A673 (cell line): ENCODE measurements at regions of chr12 and their contacts with region 1.

Region 1: DNA sequence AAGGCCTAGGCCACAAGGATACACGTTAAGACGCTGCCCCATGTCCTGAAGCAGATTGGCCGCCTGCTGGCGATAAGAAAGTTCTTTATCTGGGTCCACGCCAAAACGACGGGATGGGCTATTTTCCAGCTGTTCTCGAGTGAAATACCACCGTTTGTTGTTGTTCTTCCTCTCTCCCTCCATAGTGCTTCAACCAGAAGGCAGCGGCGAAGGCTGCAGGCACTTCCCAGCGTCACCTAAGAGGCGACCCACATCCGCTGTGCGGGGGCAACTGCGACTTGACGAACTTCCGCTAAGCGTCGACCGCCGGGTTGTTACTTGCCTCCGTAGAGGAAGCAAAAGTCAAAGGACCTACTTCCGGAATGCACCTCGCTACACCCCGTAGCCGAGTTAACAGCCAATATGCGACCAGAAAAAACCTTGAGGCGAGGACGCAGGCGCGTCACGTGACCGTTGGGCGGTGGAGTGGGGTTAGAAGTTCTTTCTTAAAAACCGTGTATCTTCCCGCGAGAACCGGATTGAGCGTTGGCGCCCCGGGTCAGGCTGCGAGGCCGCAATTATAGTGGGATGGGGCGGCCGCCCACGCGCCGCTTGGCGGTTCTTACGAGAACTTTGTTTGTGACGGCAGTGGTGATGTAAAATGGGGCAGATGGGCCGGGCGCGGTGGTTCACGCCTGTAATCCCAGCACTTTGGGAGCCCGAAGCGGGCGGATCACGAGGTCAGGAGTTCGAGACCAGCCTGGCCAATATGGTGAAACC is at the start of gene CCNT1:
- DNase-seq: peak; percentile 100
- H3K4me3 ChIP-seq: peak within 1 kb of the TSS; percentile 74
- H3K27ac ChIP-seq: peak within 1 kb of the TSS; percentile 93
- H3K4me1 ChIP-seq: peaks cover 15% of the 10 kb centered on the region
- H3K27me3 ChIP-seq: no peaks in the 10 kb centered on the region
- CTCF ChIP-seq: no peak
- total RNA-seq, gene CCNT1: 51.0 and 51.8 TPM in 2 replicates

Region 2: DNA sequence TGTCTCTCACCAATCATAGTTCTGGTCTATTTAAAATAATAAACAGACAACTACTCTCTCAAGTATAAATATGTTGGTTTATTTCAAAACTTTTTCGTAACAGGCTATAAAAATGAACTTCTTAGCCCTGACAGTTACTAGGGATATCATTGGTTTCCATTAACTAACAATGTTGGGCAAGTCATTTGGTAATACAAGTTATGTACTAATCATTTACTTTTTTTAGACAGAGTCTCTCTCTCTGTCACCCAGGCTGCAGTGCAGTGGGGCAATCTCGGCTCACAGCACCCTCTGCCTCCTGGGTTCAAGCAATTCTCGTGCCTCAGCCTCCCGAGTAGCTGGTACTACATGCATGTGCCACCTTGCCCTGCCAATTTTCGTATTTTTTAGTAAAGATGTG is 20.0 kb before region 1 on chr12:
- CTCF ChIA-PET with region 1: no interaction called
- POLR2A ChIA-PET with region 1: interaction called, 11 read pairs
- intact Hi-C with region 1: no loop called
- DNase-seq: no peak
- H3K4me3 ChIP-seq: no peak overlapping the region
- H3K27ac ChIP-seq: no peak overlapping the region
- H3K4me1 ChIP-seq: no peaks in the 10 kb centered on the region
- H3K27me3 ChIP-seq: no peaks in the 10 kb centered on the region
- CTCF ChIP-seq: no peak

Region 3: GRCh38 chr12:48758221-48758620 is 41.5 kb after region 1 on chr12:
- CTCF ChIA-PET with region 1: no interaction called
- POLR2A ChIA-PET with region 1: no interaction called
- intact Hi-C with region 1: no loop called
- DNase-seq: no peak
- H3K4me3 ChIP-seq: no peak overlapping the region
- H3K27ac ChIP-seq: no peak overlapping the region
- H3K4me1 ChIP-seq: no peaks in the 10 kb centered on the region
- H3K27me3 ChIP-seq: no peaks in the 10 kb centered on the region
- CTCF ChIP-seq: no peak

Region 4: DNA sequence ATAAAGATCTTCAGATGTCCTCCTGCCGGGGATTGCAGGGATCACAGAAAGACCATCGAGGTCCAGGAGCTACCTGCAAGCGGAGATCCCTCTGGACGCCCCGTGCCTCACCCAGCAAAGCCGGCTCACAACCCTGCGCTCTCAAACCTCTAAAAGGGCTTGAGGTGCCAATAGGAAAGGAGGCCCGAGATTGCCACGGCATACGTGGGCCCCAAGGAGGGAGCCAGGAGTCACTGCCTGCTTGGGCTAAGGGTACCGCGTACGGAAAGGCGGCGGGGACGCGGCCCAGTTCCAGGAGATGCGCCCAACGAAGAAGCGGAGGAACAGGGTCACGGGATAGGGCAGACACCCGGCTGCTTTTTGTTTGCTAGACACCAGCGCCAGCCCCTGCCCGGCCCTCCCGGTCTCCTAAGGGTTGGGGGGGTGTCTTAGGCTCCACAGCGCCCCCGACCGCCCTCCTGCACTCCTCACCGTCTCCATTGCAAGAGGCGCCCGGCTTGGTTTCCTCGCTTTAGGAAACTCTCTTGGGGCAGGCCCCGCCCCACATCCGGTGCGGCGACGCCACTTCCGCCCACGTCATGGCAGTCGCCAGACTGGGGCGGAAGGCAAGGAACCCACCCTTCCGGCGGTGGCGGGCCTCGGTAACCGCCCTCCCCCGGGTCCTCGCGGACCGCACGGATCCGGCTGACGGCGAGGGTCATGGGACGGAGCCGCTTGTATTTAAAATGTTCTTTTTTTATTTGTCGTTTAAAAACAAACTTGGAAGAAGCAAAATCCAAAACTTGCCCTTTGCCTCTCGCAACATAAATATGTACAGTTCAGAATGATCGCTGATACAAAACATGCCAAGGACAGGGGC is 301.8 kb after region 1 on chr12 and contains the start of gene PRKAG1:
- CTCF ChIA-PET with region 1: no interaction called
- POLR2A ChIA-PET with region 1: no interaction called
- intact Hi-C with region 1: no loop called
- DNase-seq: peak; percentile 98
- H3K4me3 ChIP-seq: peak within 1 kb of the TSS; percentile 82
- H3K27ac ChIP-seq: peak within 1 kb of the TSS; percentile 95
- H3K4me1 ChIP-seq: peaks cover 16% of the 10 kb centered on the region
- H3K27me3 ChIP-seq: no peaks in the 10 kb centered on the region
- CTCF ChIP-seq: peak; percentile 69
- total RNA-seq, gene PRKAG1: 50.7 and 59.6 TPM in 2 replicates